ENCODE measurements at regions of chr16 and their contacts with region 1.

Region 1: DNA sequence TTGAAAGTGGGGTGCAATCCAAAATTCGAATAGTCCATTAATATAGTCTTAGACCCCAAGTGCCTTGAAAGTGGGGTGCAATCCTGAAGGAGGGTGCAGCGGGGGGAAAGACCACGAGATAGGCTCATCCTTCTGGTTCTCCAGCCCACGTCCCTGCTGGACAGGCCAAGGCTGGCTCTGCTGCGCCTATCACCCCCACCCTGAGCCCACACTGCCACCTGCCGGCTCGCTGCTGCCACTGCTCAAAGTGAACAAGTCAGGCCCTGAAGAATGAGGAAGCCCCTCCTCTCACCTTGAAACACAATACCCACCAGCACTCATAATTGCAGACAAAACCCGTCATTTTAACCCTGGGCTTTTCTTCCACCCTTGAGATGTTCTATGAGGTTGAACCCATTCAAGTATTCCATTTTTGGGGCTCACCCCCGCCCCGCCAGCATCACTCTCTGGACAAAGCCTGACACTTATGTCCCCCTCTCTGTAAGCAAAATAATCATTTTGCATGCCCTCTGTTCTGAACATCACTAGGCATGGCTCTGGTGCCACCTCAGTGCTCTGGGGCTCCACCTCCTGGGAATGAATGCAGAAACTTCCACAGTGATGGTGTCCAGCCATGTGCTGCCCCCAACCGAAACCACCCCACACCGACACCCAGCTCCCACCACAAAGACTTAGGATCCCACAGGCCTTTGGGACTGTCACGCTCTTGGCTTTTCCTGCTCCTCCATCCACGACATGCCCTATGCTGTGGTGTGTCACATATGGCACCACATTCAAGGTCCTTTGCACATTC is 56.8 kb downstream of the BEAN1 start:
- DNase-seq: peak; percentile 91
- ATAC-seq: peak; percentile 83
- H3K4me3 ChIP-seq: no peak overlapping the region
- H3K27ac ChIP-seq: no peak overlapping the region
- H3K4me1 ChIP-seq: peaks cover 12% of the 10 kb centered on the region
- H3K27me3 ChIP-seq: no peaks in the 10 kb centered on the region
- CTCF ChIP-seq: peak; percentile 94

Region 2: DNA sequence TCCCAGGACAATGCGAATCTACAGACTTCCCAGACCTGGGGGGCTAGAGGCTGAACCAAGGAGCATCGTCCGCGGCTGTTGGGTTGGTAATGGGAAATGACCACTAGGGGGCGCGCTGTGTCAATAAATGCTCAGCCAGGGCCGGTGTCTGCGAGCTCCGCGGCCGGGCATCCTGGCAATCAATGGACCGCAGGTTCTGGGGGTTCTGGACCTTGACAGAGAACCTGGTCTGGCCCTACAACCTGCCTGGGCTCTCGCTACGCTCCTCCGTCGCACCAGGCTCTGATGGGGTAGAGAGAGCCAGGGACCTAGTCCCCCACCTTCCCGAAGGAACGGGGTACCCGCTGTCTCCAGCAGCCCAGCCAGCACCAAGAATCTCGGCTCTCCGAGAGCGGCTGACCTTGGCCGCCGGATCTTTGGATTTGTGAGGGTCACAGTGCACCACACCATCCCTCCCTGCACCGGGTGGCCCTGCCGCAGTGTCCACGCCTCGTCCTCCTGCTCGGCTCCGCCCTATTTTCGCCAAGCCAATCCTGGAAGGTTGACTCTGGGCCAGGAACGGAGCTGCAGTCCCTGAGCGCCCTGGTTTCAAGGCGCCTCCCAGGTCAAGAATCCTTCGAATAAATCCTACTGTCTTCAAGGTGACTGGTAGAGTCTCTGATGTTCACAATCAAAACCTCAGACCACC is 77.2 kb before region 1 on chr16:
- intact Hi-C with region 1: loop called (anchors 10 kb)
- DNase-seq: peak; percentile 89
- ATAC-seq: peak; percentile 94
- H3K4me3 ChIP-seq: peak overlapping the region; percentile 47
- H3K27ac ChIP-seq: no peak overlapping the region
- H3K4me1 ChIP-seq: peaks cover 24% of the 10 kb centered on the region
- H3K27me3 ChIP-seq: peaks cover 3% of the 10 kb centered on the region
- CTCF ChIP-seq: peak; percentile 92

Measured in upper lobe of right lung (tissue), 1 donor.